ENCODE measurements at regions of chr13 and their contacts with region 1.

Region 1: GRCh38 chr13:42367831-42368230 is 95.9 kb downstream of the AKAP11 start:
- DNase-seq: no peak
- ATAC-seq: no peak
- H3K4me3 ChIP-seq: no peak overlapping the region
- H3K4me3 Mint-ChIP-seq: no peak overlapping the region
- H3K27ac ChIP-seq: no peak overlapping the region
- H3K27ac Mint-ChIP-seq: no peak overlapping the region
- H3K4me1 ChIP-seq: peaks cover 6% of the 10 kb centered on the region
- H3K4me1 Mint-ChIP-seq: peaks cover 24% of the 10 kb centered on the region
- H3K27me3 ChIP-seq: no peaks in the 10 kb centered on the region
- H3K27me3 Mint-ChIP-seq: no peaks in the 10 kb centered on the region
- CTCF ChIP-seq: no peak

Region 2: DNA sequence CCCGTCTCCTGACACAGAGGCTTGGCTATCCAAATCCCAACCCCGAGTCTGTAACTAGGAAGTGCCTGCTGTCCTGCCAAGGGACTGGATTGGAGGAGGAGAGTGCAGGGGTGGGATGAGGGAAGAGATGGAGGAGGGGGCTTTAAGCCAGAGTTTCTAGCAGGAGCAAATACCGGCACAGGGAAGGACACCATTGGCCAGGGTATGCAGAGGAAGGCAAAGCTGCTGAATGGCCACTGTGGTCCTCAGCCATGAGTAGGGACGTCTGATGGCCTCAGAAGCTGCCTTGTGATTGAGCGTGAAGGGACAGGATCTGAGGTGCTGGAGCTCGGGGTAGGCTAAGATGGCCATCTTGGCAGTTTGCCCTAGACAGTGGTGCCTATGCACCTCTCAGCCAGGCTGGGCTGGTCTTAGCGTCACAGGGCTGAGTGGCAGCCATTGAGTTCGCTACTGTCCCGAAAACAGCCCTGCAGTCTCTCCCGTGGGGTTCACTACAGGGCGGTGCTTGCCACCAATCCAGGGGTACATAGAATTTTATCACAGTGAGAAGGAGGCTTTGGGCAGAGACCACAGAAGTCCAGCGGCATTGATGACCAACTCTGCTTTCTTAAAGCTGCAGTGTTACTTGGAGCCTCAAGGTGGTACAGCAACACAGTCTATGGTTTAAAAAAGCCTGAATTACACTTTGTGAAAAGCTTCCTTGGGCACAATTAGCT is 34.1 kb before region 1 on chr13:
- CTCF ChIA-PET with region 1: no interaction called
- POLR2A ChIA-PET with region 1: no interaction called
- intact Hi-C with region 1: no loop called
- DNase-seq: peak in 4 of 14 experiments; percentile 10 to 49 (median 44)
- ATAC-seq: peak; percentile 60
- H3K4me3 ChIP-seq: no peak overlapping the region
- H3K4me3 Mint-ChIP-seq: no peak overlapping the region
- H3K27ac ChIP-seq: no peak overlapping the region
- H3K27ac Mint-ChIP-seq: no peak overlapping the region
- H3K4me1 ChIP-seq: peaks cover 11% of the 10 kb centered on the region
- H3K4me1 Mint-ChIP-seq: peaks cover 25% of the 10 kb centered on the region
- H3K27me3 ChIP-seq: no peaks in the 10 kb centered on the region
- H3K27me3 Mint-ChIP-seq: no peaks in the 10 kb centered on the region
- CTCF ChIP-seq: peak; percentile 58

Region 3: GRCh38 chr13:42412812-42413483 is 45.1 kb after region 1 on chr13:
- CTCF ChIA-PET with region 1: no interaction called
- POLR2A ChIA-PET with region 1: no interaction called
- intact Hi-C with region 1: loop called in 1 of 2 experiments (anchors 5 kb)
- DNase-seq: no peak
- ATAC-seq: no peak
- H3K4me3 ChIP-seq: no peak overlapping the region
- H3K4me3 Mint-ChIP-seq: no peak overlapping the region
- H3K27ac ChIP-seq: no peak overlapping the region
- H3K27ac Mint-ChIP-seq: no peak overlapping the region
- H3K4me1 ChIP-seq: no peaks in the 10 kb centered on the region
- H3K4me1 Mint-ChIP-seq: no peaks in the 10 kb centered on the region
- H3K27me3 ChIP-seq: no peaks in the 10 kb centered on the region
- H3K27me3 Mint-ChIP-seq: no peaks in the 10 kb centered on the region
- CTCF ChIP-seq: no peak